ENCODE measurements at regions of chr11 and their contacts with region 1.

Region 1: GRCh38 chr11:133134314-133135173 is 397.8 kb downstream of the OPCML start:
- DNase-seq: peak; percentile 79

Region 2: DNA sequence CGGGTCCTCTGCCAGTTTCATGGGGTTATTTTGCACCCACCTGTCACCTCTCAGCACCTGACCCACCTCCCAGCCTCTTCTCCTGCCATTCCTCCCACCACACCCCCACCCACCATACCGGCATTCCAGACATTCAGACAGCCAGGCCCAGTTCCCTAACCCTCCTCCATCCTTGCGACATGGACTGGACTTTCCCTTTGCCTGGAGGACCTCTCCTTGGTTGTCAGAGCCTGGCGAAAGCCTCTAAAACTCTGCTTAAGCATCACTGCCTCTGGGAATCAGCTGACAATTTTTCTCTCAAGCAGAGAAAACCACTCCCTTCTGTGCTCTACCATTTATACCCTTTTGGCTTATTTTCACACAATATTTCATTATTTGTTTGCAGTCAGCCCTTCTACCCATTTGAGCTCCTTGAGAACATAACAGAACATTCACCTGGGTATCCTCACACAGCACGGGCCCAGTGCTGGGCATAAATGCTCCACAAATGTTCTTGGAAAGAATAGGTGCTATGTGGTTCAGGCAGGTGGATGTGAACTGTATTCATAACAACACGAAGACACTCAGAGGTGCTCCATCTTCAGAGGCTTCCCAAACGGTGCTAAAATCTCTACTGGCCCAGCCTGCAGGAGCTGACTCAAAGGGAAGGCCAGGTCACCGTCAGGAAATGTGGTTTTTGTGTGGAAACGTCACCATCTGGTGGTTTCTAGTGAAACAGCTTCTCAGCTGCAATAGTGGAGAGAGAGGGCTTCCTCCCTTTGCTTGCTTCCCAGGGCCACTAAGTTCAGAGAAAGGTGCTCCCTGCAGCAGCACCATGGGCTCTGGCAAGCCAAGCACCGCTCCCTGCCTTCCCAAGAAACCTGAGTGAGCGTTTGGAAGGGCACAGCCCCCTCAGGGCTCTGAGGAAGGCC is 700.4 kb after region 1 on chr11:
- in situ Hi-C with region 1: loop called (anchors 25 kb)
- DNase-seq: peak; percentile 68

Measured in KBM-7 (cell line).